Motor neuron (in vitro differentiated cells): ENCODE measurements at regions of chr12 and their contacts with region 1.

Region 1: DNA sequence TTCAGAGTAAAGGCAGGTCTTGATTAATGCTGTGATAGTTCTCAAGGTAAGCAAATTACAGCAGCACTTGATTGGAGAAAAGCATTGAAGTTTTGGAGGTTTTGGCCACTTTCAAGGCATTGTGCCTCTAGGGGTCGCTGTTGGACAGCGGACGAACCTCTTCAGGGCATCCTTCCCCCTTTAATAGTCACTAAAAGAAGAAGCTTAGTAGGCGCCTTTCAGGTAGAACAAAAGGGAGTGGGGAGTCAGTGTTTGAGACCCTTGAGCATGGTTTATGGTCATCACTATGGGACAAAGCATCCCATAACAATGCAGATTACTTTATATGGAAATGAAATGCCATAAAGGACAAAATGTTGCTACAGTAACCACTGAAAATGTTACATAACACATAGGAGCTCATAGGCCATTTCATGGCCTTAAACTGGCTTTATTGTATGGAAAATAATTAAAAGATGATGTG is 199.5 kb upstream of the DCN start:
- ATAC-seq: peak; percentile 40 to 70 (median 58)
- H3K4me3 ChIP-seq: peak overlapping the region; percentile 30 to 52 (median 39)
- H3K27ac ChIP-seq: peak overlapping the region; percentile 60 to 78
- H3K4me1 ChIP-seq: peaks cover 29 to 42% of the 10 kb centered on the region in 2 donors

Region 2: DNA sequence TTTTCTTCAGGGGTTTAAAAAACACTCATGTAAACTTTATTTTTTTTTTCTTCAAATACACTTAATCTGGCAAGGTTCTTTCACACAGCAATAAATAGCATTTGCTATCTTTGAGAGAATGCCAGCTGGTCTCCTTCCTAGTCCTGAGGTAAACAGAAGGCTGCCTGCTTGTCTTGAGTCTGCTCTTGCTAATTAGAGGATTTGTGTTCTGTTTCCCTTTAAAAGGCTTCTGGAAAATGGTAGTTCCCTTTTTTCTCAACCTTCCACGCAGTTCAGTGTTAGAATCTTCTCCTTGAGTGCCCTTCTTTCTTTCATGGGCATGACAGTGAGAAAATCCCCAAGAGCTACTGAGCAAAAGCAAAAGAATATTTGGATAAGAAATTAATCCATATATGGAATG is 107.2 kb before region 1 on chr12:
- in situ Hi-C with region 1: no loop called
- ATAC-seq: no peak
- H3K4me3 ChIP-seq: no peak overlapping the region
- H3K27ac ChIP-seq: no peak overlapping the region
- H3K4me1 ChIP-seq: no peaks in the 10 kb centered on the region

Region 3: GRCh38 chr12:91432089-91432488 is 50.0 kb after region 1 on chr12:
- in situ Hi-C with region 1: no loop called
- ATAC-seq: no peak
- H3K4me3 ChIP-seq: no peak overlapping the region
- H3K27ac ChIP-seq: no peak overlapping the region
- H3K4me1 ChIP-seq: peaks cover 18 to 24% of the 10 kb centered on the region in 2 donors

Region 4: DNA sequence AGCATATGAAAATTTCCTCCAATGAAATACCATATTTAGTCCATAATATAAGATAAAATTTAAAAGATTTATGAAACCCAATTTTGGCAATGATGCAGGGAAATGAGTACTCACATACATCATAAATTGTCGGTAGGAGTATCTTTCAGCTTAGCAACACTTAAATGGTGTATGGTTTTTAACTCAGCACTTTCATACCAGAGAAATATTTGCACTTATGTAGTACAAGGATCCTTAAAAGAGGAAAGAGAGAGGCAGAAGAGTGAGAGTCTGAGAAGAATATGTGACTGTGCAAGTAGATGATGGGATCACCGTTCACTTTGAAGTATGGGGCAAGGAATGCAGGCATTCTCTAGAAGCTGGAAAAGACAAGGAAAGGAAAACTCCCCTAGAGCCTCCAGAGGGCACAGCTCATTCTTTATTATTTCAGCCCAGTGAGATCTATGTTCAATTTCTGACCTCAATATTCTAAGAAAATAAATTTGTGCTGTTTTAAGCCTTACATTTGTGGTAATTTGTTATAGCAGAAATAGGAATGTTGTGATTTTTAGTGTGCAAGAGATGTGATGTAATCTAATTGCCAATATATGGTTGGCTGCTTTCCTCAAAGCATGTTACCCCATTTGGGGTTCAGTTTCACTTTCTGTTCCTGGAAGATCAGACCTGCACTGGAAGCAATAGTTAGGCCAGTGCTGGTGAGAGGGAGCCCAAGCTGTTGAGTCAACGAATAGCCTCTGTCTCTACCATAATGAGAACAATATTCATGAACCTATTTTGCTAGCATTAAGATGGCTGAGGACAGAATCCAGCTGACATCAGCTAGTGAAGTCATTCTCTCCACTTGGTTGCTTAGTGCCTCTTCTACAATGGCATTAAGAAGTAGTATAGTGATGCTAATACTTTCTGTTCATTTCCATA is 180.1 kb after region 1 on chr12:
- in situ Hi-C with region 1: loop called in 1 of 9 experiments (anchors 25 kb)
- ATAC-seq: peak in 7 of 8 experiments; percentile 47 to 95 (median 77)
- H3K4me3 ChIP-seq: no peak overlapping the region
- H3K27ac ChIP-seq: no peak overlapping the region
- H3K4me1 ChIP-seq: peaks cover 6 to 8% of the 10 kb centered on the region in 2 donors

Region 5: DNA sequence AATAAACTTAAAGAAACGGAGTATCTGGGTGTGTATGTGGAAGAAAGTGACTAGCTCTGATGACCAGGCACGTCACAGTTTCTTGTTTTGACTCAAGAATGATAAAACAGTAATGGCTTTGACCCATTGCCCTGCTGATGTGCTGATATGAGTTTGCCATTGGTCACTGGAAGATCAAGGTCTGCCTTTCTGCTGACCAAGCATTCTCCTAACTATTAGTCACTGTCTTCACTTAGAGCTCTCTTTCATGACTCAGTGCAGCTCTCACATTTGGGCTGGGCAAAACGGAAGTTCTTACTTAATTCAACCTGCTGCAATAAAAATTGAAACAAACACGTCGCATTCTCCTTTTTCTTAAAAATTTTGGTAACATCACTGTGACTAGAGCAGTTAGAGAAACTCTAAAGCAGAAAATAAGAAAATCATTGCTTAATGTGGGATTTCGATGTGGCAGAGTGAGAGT is 396.9 kb after region 1 on chr12:
- in situ Hi-C with region 1: loop called in 1 of 9 experiments (anchors 25 kb)
- ATAC-seq: peak in 7 of 8 experiments; percentile 62 to 98 (median 78)
- H3K4me3 ChIP-seq: no peak overlapping the region
- H3K27ac ChIP-seq: no peak overlapping the region
- H3K4me1 ChIP-seq: peaks cover 12 to 24% of the 10 kb centered on the region in 2 donors

Region 6: DNA sequence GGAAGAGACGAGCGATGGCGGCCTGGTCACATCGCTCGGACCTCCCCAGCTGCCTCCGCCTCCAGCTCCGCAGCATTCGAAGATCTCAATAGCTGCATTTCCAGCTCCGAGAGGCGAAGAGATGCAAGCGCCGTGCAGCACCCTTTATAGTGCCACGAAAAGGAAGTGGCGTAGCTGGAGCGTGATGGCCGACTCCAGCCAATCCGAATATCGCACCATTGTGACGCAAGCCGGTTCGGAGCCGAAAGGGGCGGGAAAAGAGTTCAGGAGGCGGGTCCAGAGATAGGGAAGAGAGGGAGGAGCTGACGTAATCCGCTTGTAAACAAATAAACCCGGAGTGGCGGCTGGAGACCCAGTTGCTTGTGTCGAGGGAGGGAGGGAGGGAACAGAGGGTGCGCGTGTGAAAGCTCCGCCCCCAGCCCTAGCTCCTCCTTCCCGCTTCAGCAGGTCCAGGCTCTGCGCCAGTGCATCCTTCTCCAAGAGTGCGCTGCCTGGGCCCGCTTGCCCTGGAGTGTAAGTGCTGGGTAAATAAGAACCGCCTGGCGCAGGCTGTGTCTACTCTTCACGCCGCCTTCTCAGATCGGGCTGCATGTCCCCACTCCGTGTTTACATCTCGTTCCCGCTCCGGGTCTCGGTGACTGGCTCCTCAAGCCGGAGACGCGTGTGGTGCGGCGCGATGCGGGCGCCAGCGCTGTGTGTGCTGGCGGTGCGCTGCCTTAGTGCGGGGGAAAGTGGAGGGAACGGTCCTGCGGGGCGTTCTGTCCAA is 763.8 kb after region 1 on chr12 and contains the start of gene BTG1:
- in situ Hi-C with region 1: loop called in 6 of 9 experiments (anchors 25 kb)
- ATAC-seq: peak; percentile 76 to 86 (median 82)
- H3K4me3 ChIP-seq: peak within 1 kb of the TSS; percentile 57 to 83 (median 79)
- H3K27ac ChIP-seq: peak within 1 kb of the TSS; percentile 86 to 90
- H3K4me1 ChIP-seq: peaks cover 0 to 5% of the 10 kb centered on the region in 2 donors
- total RNA-seq, gene BTG1: 33.1 to 161 (median 68.2) TPM